Activated T-helper 2 cell treated with anti-CD3 and anti-CD28 coated beads, Interferon-gamma antibody, Interleukin-2, Interleukin-4, amounts not matched to agents 10 μg/mL and 5 μg/mL and 100 μg/mL, durations not matched to agents 14 hours and 24 hours and 36 hours (primary cell): ENCODE measurements at regions of chr4 and their contacts with region 1.

Region 1: DNA sequence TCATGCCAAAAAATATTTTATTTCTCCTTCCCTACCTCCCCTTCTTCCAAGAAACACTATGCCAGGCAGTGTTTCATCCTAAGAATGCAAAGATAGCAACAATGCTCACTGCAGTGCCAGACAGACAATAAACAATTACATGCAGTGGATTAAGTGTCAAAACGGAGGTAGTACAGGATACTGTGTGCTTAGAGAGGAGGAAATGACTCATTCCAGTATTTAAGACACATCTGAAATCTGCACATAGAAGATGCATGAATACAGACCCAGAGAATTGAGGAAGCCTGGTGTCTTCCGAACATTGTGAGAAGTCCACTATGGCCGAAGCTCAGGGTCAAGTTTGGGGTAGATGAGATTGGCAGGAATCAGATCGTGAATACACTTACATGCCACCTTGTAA is 326.4 kb downstream of the PPP3CA start:
- DNase-seq: peak; percentile 10
- H3K4me3 Mint-ChIP-seq: peak overlapping the region; percentile 57
- H3K27ac Mint-ChIP-seq: peak overlapping the region; percentile 74
- H3K4me1 Mint-ChIP-seq: peaks cover 54% of the 10 kb centered on the region
- H3K27me3 Mint-ChIP-seq: no peaks in the 10 kb centered on the region

Region 2: DNA sequence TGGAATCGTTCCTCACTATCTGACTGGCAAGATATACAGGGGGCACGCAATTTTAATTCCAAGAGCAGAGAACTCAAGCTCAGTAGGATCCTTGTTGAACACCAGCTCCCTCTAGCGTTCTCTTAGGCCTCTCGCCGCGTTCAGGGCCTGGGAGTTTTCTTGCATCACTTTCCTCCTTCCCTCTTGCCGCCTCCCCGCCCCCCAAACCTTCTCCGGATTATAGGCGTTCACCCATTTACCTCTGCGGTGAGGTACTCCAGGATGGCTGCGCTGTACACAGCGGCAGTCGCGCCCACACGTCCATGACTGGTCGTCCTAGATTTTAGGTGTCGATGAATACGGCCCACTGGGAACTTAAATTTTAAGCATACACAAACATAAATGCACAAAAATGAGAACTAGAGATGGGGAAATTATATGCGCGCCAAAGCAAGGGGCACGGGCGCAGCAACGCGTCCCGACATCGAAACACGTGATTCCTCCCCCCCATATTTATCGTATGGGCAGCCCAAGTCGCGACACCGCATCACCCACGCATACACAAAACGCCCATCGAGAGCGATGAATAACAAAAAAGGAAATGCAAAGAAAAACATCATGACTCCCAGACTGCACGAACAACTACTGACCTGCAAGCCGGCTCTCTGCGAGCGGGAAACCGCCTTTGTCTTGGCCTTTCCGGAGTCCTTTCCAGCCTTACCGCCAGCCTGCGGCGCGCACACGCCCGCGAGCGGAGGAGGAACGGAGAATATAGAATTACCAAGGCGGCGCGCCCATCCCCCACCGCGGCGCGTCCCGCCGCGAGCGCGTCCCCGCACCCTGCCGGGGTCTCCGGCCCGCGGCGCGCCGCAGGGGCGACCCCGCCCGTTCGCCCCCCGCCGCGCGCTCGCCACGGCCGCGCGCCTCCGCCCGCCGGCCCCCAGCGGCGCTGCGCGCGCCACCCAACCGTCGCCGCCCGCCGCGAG is 1071.6 kb before region 1 on chr4:
- intact Hi-C with region 1: loop called (anchors 10 kb)
- DNase-seq: peak; percentile 87
- H3K4me3 Mint-ChIP-seq: no peak overlapping the region
- H3K27ac Mint-ChIP-seq: no peak overlapping the region
- H3K4me1 Mint-ChIP-seq: peaks cover 31% of the 10 kb centered on the region
- H3K27me3 Mint-ChIP-seq: no peaks in the 10 kb centered on the region

Region 3: GRCh38 chr4:100762738-100763137 is 258.2 kb before region 1 on chr4:
- intact Hi-C with region 1: no loop called
- DNase-seq: no peak
- H3K4me3 Mint-ChIP-seq: no peak overlapping the region
- H3K27ac Mint-ChIP-seq: no peak overlapping the region
- H3K4me1 Mint-ChIP-seq: no peaks in the 10 kb centered on the region
- H3K27me3 Mint-ChIP-seq: no peaks in the 10 kb centered on the region

Region 4: DNA sequence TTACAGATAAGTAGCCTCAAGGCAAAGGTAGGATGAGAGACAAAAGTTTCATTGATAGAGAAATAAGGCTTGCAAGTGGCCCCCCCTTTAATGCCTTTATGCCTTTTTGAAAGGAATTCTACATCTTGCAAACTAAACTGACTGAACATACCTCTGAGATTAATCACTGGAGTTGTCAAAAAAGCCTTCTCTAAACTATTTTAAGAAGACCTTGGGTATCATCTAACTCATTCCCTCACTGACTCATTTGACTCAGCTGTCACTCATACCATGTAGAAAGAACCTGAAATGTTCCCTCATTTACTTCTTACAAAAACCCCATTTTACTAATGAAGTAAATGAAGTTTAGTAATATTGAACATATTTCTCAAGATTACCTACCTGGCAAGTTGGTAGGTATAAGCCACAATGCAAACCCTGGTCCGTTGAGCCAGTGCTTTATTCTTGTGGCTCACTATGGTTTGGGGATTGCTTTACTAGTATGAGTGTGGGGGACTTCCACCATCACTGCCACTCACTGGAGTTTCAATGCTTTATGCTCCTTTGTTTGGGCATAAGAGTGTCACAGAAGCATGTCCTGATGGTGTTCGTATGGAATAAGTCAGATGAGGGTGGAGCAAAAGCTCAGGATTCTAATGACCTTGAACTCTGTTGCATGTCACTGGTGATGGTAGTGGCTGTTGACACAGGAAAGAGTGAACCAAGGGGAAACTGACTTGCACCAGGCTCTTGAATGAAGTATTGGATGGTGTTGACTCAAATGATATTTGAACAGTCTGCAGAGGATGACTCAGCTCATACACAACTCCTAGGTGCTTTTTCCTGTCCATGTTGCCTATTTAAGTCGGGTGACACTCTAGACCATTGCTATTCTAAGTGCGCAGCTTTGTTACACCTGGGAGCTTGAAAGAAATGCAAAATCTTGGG is 197.6 kb before region 1 on chr4:
- intact Hi-C with region 1: loop called (anchors 2 kb)
- DNase-seq: peak; percentile 9
- H3K4me3 Mint-ChIP-seq: no peak overlapping the region
- H3K27ac Mint-ChIP-seq: peak overlapping the region; percentile 76
- H3K4me1 Mint-ChIP-seq: peaks cover 22% of the 10 kb centered on the region
- H3K27me3 Mint-ChIP-seq: no peaks in the 10 kb centered on the region

Region 5: DNA sequence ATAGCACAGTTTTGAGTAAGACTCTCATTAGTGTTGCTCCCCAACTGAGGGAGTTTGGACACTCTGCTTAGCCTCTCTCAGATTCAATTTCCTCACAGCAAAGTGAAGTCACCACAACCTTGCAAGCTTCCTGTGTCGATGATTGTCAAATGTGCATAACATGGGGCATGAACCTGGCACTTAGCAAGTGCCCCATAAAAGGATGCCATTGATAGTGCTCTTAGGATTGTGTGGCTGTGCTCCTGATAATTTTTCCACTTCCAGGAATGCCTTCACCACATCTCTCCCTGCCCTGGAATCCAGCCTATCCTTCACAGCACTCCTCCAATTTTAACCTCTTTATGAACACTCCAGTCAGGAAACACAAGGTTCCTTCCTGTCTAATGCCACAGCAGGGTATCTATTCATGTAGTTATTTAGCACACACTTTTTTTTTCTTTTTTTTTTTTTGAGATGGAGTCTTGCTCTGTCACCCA is 17.0 kb after region 1 on chr4:
- intact Hi-C with region 1: loop called (anchors 2 kb)
- DNase-seq: no peak
- H3K4me3 Mint-ChIP-seq: peak overlapping the region; percentile 5
- H3K27ac Mint-ChIP-seq: peak overlapping the region; percentile 65
- H3K4me1 Mint-ChIP-seq: peaks cover 11% of the 10 kb centered on the region
- H3K27me3 Mint-ChIP-seq: no peaks in the 10 kb centered on the region

Region 6: DNA sequence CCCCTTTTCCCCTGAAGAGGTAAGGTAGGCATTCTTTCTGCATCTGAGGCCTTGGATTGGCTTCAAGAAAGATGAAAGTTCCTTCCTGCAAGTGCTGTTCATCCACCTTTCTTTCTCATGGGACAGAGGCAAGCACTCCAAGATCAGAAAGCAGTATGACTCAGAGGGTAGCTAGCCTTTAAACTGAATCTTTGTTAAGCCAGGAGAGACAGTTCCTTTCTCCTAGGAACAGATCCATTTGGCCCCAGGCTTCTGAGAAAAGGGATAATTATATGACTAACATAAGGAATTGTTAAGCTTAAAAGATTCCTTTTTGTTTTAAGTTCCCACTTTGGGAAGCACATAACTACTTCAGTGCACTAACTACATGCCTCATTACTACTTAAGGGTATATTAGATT is 134.4 kb after region 1 on chr4:
- intact Hi-C with region 1: loop called (anchors 1 kb)
- DNase-seq: no peak
- H3K4me3 Mint-ChIP-seq: no peak overlapping the region
- H3K27ac Mint-ChIP-seq: no peak overlapping the region
- H3K4me1 Mint-ChIP-seq: peaks cover 29% of the 10 kb centered on the region
- H3K27me3 Mint-ChIP-seq: no peaks in the 10 kb centered on the region

Region 7: GRCh38 chr4:101400096-101400495 is 379.1 kb after region 1 on chr4:
- intact Hi-C with region 1: loop called (anchors 5 kb)
- DNase-seq: no peak
- H3K4me3 Mint-ChIP-seq: no peak overlapping the region
- H3K27ac Mint-ChIP-seq: peak overlapping the region; percentile 51
- H3K4me1 Mint-ChIP-seq: peaks cover 18% of the 10 kb centered on the region
- H3K27me3 Mint-ChIP-seq: no peaks in the 10 kb centered on the region